ENCODE measurements at regions of chr19 and their contacts with region 1.

Region 1: GRCh38 chr19:18128044-18128443 is 24.9 kb upstream of the PIK3R2 start:
- DNase-seq: no peak

Region 2: GRCh38 chr19:17336872-17337722 is 790.9 kb before region 1 on chr19 and contains the start of gene GTPBP3:
- intact Hi-C with region 1: loop called in 1 of 2 experiments (anchors 10 kb)
- DNase-seq: peak; percentile 98
- total RNA-seq, gene GTPBP3: 12.7 to 15.8 TPM

Region 3: DNA sequence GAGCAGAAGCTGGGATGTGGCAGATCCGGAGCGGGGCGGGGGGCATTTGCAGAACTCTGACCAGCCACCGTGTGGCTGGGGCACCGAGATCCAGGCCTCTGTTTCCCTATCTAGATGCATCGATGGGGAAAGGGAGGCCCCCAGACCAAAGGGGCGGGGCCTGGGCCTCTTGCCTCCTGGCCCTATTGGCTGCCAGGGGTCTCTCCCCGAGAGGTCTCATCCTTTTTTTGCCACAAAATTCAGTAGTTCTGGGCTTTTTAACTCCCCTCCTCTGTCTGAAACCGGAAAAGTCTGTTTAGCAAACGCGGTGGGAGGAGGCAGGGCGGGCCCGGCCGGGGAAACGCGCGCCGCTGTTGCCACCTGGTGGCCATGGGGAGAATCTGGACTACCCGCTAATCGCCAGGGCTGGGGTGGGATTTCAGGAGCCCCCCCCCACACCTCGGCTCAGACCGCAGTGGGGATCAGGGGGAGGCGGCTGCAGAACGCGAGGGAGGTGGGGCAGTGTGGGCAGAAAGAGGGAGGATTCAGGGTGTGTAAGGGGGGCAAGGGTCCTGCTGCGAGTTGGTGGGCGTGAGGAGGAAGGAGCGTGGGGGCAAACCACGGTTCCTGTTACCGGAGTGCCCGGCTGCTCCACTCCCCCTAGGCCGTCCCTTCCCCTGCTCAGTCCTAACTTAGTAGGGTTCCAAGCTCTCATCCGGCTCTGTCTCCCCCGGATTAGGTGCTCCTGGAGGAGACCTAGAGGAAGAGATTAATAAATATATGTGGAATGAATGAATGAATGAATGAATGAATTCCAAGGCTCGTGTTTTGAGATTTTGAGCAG is 69.6 kb before region 1 on chr19:
- intact Hi-C with region 1: no loop called
- DNase-seq: peak; percentile 96

Region 4: DNA sequence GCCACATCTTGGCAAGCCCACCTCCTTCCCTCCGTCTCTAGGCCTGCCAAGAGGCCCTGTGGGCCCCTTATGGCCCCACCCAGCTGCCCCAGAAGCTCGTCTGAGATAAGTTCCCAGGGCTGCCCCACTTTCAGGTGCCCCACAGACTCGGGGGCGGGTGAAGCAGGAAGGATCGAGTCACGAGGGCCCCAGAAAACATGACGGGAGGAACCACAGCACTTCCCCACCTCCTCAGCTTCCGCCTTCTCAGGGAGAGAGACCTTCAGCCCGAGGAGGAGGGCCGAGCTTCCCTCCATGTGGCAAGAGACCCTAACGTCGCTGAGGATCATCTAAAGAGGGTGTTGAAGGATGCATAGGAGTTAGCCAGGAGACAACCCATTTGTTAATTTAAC is 36.8 kb before region 1 on chr19:
- intact Hi-C with region 1: no loop called
- DNase-seq: peak; percentile 88

Region 5: DNA sequence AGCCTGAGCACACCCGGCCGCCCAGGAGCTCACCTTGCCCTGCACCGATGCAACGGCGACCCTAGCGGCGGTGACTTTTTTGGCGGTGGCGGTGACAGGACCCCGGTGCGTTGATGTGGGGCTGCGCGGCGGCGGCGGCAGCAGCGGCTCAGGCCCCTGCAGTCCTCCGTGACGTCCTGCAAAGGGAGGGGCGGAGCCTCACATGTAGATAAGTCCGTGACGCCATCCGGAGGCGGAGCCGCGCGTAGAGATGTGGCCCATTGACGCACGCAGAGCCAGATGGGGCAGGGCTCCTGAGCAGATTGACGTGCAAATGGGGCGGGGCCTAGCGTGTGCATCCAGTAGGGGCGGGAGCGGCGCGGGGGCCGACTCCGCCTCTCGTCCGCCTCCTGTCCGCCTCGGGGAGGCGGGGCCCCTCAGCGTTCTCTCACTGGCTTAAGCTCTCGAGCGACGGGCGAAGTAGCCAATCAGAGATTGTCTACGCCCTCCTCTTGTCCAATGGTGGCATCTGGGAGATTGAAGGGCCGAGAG is 75.9 kb after region 1 on chr19 and contains the start of gene RAB3A:
- intact Hi-C with region 1: no loop called
- DNase-seq: peak; percentile 100
- total RNA-seq, gene RAB3A: 1.9 to 2.9 TPM

Measured in posterior vena cava (tissue), 2 donors.